B cell (primary cell): ENCODE measurements at regions of chr19 and their contacts with region 1.

Region 1: GRCh38 chr19:16495982-16496612 is at the starts of genes C19orf44 and CALR3:
- DNase-seq: peak; percentile 98
- ATAC-seq: peak; percentile 98
- H3K4me3 ChIP-seq: peak within 1 kb of the TSS; percentile 65 to 77 (median 73)
- H3K4me3 Mint-ChIP-seq: peak within 1 kb of the TSS; percentile 91
- H3K27ac ChIP-seq: peak within 1 kb of the TSS; percentile 40 to 79
- H3K27ac Mint-ChIP-seq: peak within 1 kb of the TSS; percentile 88
- H3K4me1 ChIP-seq: peaks cover 3 to 15% of the 10 kb centered on the region in 2 donors
- H3K4me1 Mint-ChIP-seq: peaks cover 13% of the 10 kb centered on the region
- H3K27me3 ChIP-seq: no peaks in the 10 kb centered on the region
- H3K27me3 Mint-ChIP-seq: no peaks in the 10 kb centered on the region
- CTCF ChIP-seq: no peak
- total RNA-seq, gene C19orf44: 8.4 and 9.8 TPM in 2 replicates
- total RNA-seq, gene CALR3: 0.44 TPM in 1 of 2 replicates, not detected in the other

Region 2: GRCh38 chr19:16197622-16198369 is 298.3 kb before region 1 on chr19 and contains the start of gene AP1M1:
- CTCF ChIA-PET with region 1: no interaction called
- POLR2A ChIA-PET with region 1: no interaction called
- intact Hi-C with region 1: loop called (anchors 5 kb)
- DNase-seq: peak; percentile 99
- ATAC-seq: peak; percentile 93
- H3K4me3 ChIP-seq: peak within 1 kb of the TSS; percentile 67 to 92 (median 87)
- H3K4me3 Mint-ChIP-seq: peak within 1 kb of the TSS; percentile 93
- H3K27ac ChIP-seq: peak within 1 kb of the TSS; percentile 66 to 92
- H3K27ac Mint-ChIP-seq: peak within 1 kb of the TSS; percentile 98
- H3K4me1 ChIP-seq: peaks cover 18 to 28% of the 10 kb centered on the region in 2 donors
- H3K4me1 Mint-ChIP-seq: peaks cover 35% of the 10 kb centered on the region
- H3K27me3 ChIP-seq: no peaks in the 10 kb centered on the region
- H3K27me3 Mint-ChIP-seq: no peaks in the 10 kb centered on the region
- CTCF ChIP-seq: no peak
- total RNA-seq, gene AP1M1: 90.4 and 102 TPM in 2 replicates

Region 3: DNA sequence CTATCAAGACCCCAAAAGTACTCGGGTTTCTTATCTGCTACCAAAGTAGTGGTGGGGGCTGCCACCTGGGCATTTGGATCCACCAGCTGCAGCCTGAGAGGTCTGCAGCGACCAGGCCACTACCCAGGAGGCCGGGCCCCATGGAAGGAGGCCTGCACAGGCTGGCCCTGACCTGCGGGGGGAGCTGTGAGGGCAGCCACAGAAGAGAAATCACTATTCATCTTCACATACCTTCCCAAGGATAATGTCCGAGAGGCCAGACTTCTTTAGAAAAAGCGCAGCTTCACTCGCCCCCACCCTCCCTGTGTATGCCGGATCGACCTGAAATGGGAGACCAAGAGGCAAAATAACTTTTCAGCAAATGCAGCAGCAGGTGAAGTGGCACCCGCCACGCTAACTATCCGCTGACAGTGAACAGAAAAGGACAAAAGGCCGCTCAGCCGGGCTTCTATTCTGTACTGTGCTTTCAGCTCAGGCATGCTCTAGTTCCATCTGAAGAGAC is 54.4 kb before region 1 on chr19:
- CTCF ChIA-PET with region 1: interaction called, 4 read pairs
- POLR2A ChIA-PET with region 1: no interaction called
- intact Hi-C with region 1: loop called (anchors 1 kb)
- DNase-seq: no peak
- ATAC-seq: no peak
- H3K4me3 ChIP-seq: no peak overlapping the region
- H3K4me3 Mint-ChIP-seq: peak overlapping the region; percentile 16
- H3K27ac ChIP-seq: no peak overlapping the region
- H3K27ac Mint-ChIP-seq: peak overlapping the region; percentile 97
- H3K4me1 ChIP-seq: peaks cover 57 to 80% of the 10 kb centered on the region in 2 donors
- H3K4me1 Mint-ChIP-seq: peaks cover 77% of the 10 kb centered on the region
- H3K27me3 ChIP-seq: no peaks in the 10 kb centered on the region
- H3K27me3 Mint-ChIP-seq: no peaks in the 10 kb centered on the region
- CTCF ChIP-seq: peak; percentile 42

Region 4: GRCh38 chr19:16476401-16476800 is 19.7 kb before region 1 on chr19:
- CTCF ChIA-PET with region 1: no interaction called
- POLR2A ChIA-PET with region 1: interaction called, 9 read pairs
- intact Hi-C with region 1: loop called (anchors 1 kb)
- DNase-seq: no peak
- ATAC-seq: no peak
- H3K4me3 ChIP-seq: no peak overlapping the region
- H3K4me3 Mint-ChIP-seq: no peak overlapping the region
- H3K27ac ChIP-seq: no peak overlapping the region
- H3K27ac Mint-ChIP-seq: no peak overlapping the region
- H3K4me1 ChIP-seq: peaks cover 0 to 6% of the 10 kb centered on the region in 2 donors
- H3K4me1 Mint-ChIP-seq: no peaks in the 10 kb centered on the region
- H3K27me3 ChIP-seq: no peaks in the 10 kb centered on the region
- H3K27me3 Mint-ChIP-seq: no peaks in the 10 kb centered on the region
- CTCF ChIP-seq: no peak

Region 5: DNA sequence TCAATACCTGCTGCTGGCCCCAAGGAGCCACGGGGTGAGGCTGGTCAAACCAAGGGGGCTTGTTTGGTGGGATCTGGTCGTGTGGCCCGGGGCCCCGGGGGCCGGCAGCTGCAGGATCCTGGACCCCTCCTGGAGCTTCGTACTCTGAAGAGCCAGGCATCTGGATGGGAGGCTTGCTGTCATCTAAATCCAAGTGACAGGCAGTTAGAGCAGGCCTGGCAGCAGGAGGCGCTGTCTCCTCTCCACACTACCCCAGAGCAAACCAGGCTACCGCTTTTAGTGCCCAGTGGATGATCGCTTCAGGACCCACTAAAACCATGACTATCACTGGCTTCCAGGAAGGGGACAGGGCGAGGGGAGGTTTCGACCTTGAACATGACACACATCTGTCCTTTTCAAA is 32.0 kb after region 1 on chr19:
- CTCF ChIA-PET with region 1: no interaction called
- POLR2A ChIA-PET with region 1: no interaction called
- intact Hi-C with region 1: no loop called
- DNase-seq: peak; percentile 53
- ATAC-seq: peak; percentile 33
- H3K4me3 ChIP-seq: no peak overlapping the region
- H3K4me3 Mint-ChIP-seq: no peak overlapping the region
- H3K27ac ChIP-seq: no peak overlapping the region
- H3K27ac Mint-ChIP-seq: no peak overlapping the region
- H3K4me1 ChIP-seq: no peaks in the 10 kb centered on the region
- H3K4me1 Mint-ChIP-seq: no peaks in the 10 kb centered on the region
- H3K27me3 ChIP-seq: no peaks in the 10 kb centered on the region
- H3K27me3 Mint-ChIP-seq: no peaks in the 10 kb centered on the region
- CTCF ChIP-seq: peak; percentile 43

Region 6: DNA sequence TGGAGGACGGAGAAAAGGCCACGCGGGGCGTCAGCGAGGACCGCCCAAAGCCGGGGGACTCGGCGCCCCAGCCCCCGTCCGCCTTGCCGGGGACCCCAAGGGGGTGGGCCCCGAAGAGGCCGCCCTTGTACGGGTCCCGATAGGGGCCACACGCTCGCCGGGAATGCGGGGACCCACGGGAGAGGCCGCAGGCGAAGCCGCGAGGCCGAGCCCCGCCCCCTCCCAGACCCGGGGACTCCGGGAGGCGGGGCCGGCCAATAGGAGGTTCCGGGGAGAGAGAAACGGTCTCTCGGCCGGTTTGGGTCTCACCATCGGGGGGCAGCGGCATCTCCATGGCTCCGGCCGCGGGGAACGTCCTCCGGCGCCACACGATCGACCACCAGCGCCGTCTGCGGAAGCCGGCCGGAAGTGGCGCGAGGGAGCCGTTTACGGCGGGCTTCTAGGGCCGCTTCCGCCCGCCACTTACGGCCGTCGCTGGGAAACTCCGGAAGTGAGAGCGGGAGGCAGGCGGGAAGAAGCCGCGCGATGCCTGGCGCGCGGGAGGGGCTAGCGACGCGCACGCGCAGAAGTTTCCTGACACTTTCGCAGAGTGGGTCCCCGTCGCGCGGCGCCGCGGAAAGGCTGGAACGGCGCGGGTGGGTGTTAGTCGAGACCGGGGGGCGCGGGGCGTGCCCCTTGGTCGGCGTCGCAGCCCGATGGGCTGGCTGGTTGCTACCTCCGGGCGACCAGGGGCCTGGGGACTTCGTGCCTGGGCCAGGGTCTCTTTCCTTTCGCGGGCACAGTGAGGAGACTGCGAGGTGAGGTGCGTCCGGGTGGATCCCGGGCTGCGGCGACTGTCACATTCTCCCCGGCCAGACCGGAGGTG is 46.2 kb after region 1 on chr19 and contains the start of gene CHERP:
- CTCF ChIA-PET with region 1: no interaction called
- POLR2A ChIA-PET with region 1: interaction called, 3 read pairs
- intact Hi-C with region 1: loop called (anchors 1 kb)
- DNase-seq: peak; percentile 97
- ATAC-seq: peak; percentile 81
- H3K4me3 ChIP-seq: peak within 1 kb of the TSS; percentile 76 to 90 (median 88)
- H3K4me3 Mint-ChIP-seq: peak within 1 kb of the TSS; percentile 91
- H3K27ac ChIP-seq: peak within 1 kb of the TSS; percentile 61 to 77
- H3K27ac Mint-ChIP-seq: peak within 1 kb of the TSS; percentile 89
- H3K4me1 ChIP-seq: peaks cover 29 to 52% of the 10 kb centered on the region in 2 donors
- H3K4me1 Mint-ChIP-seq: peaks cover 55% of the 10 kb centered on the region
- H3K27me3 ChIP-seq: no peaks in the 10 kb centered on the region
- H3K27me3 Mint-ChIP-seq: no peaks in the 10 kb centered on the region
- CTCF ChIP-seq: no peak
- total RNA-seq, gene CHERP: 87.3 and 98.9 TPM in 2 replicates

Region 7: DNA sequence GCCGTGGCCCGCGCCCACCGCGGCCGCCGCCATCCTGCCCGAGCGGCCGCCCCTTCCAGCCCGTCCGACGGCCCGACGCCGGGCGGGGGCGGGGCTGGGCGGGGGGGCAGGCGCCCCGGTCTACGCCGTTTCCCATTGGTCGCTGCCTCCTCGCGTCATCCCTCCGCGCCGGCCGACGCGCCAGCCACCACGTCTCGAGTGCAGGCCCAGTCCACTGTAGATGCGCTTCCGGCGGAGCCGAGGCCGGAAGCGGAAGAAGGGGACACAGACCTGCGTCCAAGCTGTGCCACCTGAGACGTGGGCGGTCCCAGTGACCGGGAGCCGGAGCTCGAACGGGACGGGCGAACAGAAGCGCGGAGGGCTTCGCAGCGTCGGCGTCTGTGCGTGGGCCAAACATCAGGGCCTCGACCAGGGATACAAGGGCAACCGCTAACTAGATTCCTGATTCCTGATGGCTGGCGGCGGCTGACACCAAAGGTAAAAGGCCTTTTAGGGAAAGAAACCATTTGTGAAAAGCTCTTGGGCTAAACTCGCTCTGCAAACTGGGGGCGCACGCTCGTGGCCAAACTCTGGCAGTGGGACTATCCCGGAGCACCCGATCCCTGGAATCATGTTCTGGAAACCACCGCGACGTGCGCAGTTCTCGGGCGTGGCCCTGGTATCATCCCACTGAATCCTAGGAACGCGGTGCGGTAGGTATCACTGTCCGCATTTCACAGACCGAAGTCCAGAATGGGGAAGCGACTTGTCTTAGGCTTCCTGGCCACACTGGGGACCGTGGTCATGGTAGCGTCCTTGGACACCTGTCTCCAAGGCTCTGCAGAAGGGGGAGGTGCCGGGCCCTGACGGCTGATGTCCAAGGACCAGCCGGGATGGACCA is 76.5 kb after region 1 on chr19 and contains the start of gene SLC35E1:
- CTCF ChIA-PET with region 1: no interaction called
- POLR2A ChIA-PET with region 1: interaction called, 3 read pairs
- intact Hi-C with region 1: loop called (anchors 1 kb)
- DNase-seq: peak; percentile 94
- ATAC-seq: peak; percentile 92
- H3K4me3 ChIP-seq: peak within 1 kb of the TSS; percentile 75 to 97 (median 88)
- H3K4me3 Mint-ChIP-seq: peak within 1 kb of the TSS; percentile 98
- H3K27ac ChIP-seq: peak within 1 kb of the TSS; percentile 79 to 96
- H3K27ac Mint-ChIP-seq: peak within 1 kb of the TSS; percentile 98
- H3K4me1 ChIP-seq: peaks cover 27 to 39% of the 10 kb centered on the region in 2 donors
- H3K4me1 Mint-ChIP-seq: peaks cover 46% of the 10 kb centered on the region
- H3K27me3 ChIP-seq: no peaks in the 10 kb centered on the region
- H3K27me3 Mint-ChIP-seq: no peaks in the 10 kb centered on the region
- CTCF ChIP-seq: no peak
- total RNA-seq, gene SLC35E1: 46.8 and 51.6 TPM in 2 replicates

Region 8: GRCh38 chr19:16628183-16628983 is 132.3 kb after region 1 on chr19 and contains the start of gene MED26:
- CTCF ChIA-PET with region 1: no interaction called
- POLR2A ChIA-PET with region 1: no interaction called
- intact Hi-C with region 1: loop called (anchors 1 kb)
- DNase-seq: peak; percentile 97
- ATAC-seq: peak; percentile 93
- H3K4me3 ChIP-seq: peak within 1 kb of the TSS; percentile 18 to 93 (median 87)
- H3K4me3 Mint-ChIP-seq: peak within 1 kb of the TSS; percentile 97
- H3K27ac ChIP-seq: peak within 1 kb of the TSS; percentile 87 to 93
- H3K27ac Mint-ChIP-seq: peak within 1 kb of the TSS; percentile 98
- H3K4me1 ChIP-seq: peaks cover 23 to 27% of the 10 kb centered on the region in 2 donors
- H3K4me1 Mint-ChIP-seq: peaks cover 53% of the 10 kb centered on the region
- H3K27me3 ChIP-seq: no peaks in the 10 kb centered on the region
- H3K27me3 Mint-ChIP-seq: no peaks in the 10 kb centered on the region
- CTCF ChIP-seq: no peak
- total RNA-seq, gene MED26: 32.2 and 33.6 TPM in 2 replicates

Region 9: DNA sequence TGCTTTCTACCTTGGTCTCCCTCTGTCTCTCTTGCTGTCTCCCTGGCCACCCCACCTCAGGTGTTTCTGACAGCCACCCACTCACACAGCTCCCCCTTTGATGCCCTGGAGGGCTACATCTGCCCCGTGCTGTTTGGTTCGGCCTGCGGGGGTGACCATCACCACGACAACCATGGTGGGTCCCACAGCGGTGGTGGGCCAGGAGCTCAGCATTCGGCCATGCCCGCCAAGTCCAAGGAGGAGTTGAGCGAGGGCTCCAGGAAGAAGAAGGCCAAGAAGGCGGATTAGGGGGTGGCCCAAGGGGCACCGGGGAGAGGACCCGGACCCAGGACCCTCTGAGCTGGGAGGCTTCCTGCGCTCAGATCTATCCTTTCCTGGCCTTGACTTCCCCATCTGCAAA is 192.0 kb after region 1 on chr19:
- CTCF ChIA-PET with region 1: no interaction called
- POLR2A ChIA-PET with region 1: no interaction called
- intact Hi-C with region 1: no loop called
- DNase-seq: no peak
- ATAC-seq: no peak
- H3K4me3 ChIP-seq: no peak overlapping the region
- H3K4me3 Mint-ChIP-seq: no peak overlapping the region
- H3K27ac ChIP-seq: no peak overlapping the region
- H3K27ac Mint-ChIP-seq: no peak overlapping the region
- H3K4me1 ChIP-seq: no peaks in the 10 kb centered on the region
- H3K4me1 Mint-ChIP-seq: no peaks in the 10 kb centered on the region
- H3K27me3 ChIP-seq: no peaks in the 10 kb centered on the region
- H3K27me3 Mint-ChIP-seq: no peaks in the 10 kb centered on the region
- CTCF ChIP-seq: no peak